A549 (cell line): ENCODE measurements at regions of chr17 and their contacts with region 1.

Region 1: GRCh38 chr17:82297714-82298537 is 19.5 kb downstream of the CD7 start:
- DNase-seq: peak; percentile 92 to 98
- ATAC-seq: peak; percentile 72 to 74
- H3K4me3 ChIP-seq: peak overlapping the region; percentile 42
- H3K27ac ChIP-seq: peak overlapping the region; percentile 96 to 98
- H3K4me1 ChIP-seq: peaks cover 69% of the 10 kb centered on the region
- CTCF ChIP-seq: peak; percentile 15; the same call in 1 of the 3 replicates
- EP300 ChIP-seq: peak in 1 of 2 experiments; percentile 56; a peak in 2 of 5 replicates
- POLR2A ChIP-seq: peak; percentile 63
- RAD21 ChIP-seq: no peak; a peak in 1 of 5 replicates

Region 2: GRCh38 chr17:82020891-82021727 is 276.8 kb before region 1 on chr17:
- CTCF ChIA-PET with region 1: no interaction called
- POLR2A ChIA-PET with region 1: no interaction called
- DNase-seq: peak; percentile 89 to 90
- ATAC-seq: peak; percentile 55 to 56
- H3K4me3 ChIP-seq: peak overlapping the region; percentile 77
- H3K27ac ChIP-seq: peak overlapping the region; percentile 80 to 92; a peak in 5 of 6 replicates
- H3K4me1 ChIP-seq: peaks cover 41% of the 10 kb centered on the region
- CTCF ChIP-seq: peak; percentile 94
- EP300 ChIP-seq: no peak
- POLR2A ChIP-seq: no peak
- RAD21 ChIP-seq: peak; percentile 97 to 98

Region 3: DNA sequence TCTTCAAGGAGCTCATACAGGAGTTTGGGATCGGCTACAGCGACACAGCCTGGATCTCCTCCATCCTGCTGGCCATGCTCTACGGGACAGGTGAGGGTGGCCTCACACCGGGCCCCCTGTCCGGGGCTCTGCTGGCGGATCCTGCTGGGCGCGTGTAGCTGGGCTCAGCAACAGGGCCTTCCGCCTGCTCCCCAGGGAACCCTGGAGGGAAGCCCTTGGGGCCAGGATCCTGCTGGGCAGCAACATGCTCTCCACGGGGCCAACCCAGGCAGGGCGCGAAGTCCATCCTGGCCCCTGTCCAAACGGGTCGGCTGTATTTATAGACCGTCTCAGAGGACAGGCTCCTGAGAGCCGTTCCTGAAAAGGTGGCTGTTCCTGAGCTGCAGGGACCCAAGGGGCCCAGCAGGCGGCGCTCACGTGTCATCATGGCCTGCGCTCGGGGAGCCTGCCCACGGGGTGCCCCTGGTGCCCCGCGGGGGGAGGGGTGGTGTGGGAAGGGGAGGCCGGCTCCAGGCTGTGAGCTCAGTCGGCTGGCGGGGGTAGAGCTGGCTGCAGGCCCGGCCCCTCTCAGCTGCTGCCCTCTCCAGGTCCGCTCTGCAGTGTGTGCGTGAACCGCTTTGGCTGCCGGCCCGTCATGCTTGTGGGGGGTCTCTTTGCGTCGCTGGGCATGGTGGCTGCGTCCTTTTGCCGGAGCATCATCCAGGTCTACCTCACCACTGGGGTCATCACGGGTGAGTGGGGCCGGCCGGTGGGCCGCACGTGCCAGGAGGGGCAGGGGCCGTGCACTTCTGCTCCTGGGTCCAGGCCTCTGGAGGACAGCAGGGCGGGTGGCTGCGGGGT is 61.6 kb before region 1 on chr17:
- CTCF ChIA-PET with region 1: interaction called, 227 read pairs
- POLR2A ChIA-PET with region 1: interaction called, 24 read pairs
- DNase-seq: peak; percentile 79 to 80
- ATAC-seq: peak; percentile 2 to 17; a peak in 3 of 6 replicates
- H3K4me3 ChIP-seq: no peak overlapping the region
- H3K27ac ChIP-seq: peak overlapping the region; percentile 68 to 71
- H3K4me1 ChIP-seq: peaks cover 83% of the 10 kb centered on the region
- CTCF ChIP-seq: peak; percentile 97
- EP300 ChIP-seq: no peak
- POLR2A ChIP-seq: no peak
- RAD21 ChIP-seq: peak; percentile 92 to 95

Region 4: GRCh38 chr17:82267575-82268379 is 30.1 kb before region 1 on chr17:
- CTCF ChIA-PET with region 1: interaction called, 10 read pairs
- POLR2A ChIA-PET with region 1: interaction called, 36 read pairs
- DNase-seq: peak; percentile 94 to 97
- ATAC-seq: peak; percentile 93 to 94
- H3K4me3 ChIP-seq: peak overlapping the region; percentile 35
- H3K27ac ChIP-seq: peak overlapping the region; percentile 89 to 91
- H3K4me1 ChIP-seq: peaks cover 68% of the 10 kb centered on the region
- CTCF ChIP-seq: no peak
- EP300 ChIP-seq: peak in 1 of 2 experiments; percentile 54; a peak in 1 of 5 replicates
- POLR2A ChIP-seq: no peak
- RAD21 ChIP-seq: peak; percentile 29 to 43; a peak in 1 of 5 replicates

Region 5: DNA sequence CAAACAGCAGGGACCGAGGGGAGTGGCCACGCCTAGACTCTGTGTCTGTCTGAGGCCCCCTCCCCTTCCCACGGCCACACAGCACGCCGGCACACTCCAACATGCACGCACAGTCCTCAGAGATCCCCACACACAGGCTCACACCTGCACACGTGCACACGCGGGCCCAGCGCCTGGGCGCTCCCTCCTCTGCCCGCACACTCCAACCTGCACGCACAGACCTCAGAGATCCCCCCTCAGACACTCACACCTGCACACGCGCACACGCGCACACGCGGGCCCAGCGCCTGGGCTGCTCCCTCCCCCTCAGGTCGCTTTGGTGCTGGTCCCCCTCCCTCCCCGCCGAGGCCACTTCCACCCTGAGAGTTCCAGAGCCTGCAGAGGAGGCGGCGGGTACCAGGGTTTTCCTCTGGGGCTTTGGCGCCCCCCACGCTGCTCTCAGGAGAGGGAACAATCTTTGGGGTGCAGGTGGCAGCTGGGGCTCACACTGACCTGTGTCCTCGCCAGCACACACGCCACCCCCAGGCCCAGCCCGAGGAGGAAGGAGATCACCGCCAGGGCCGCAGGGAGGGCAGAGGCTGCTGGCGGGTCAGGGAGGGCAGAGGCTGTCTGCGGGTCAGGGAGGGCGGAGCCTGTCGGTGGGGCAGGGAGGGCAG is 17.9 kb after region 1 on chr17:
- CTCF ChIA-PET with region 1: interaction called, 343 read pairs
- POLR2A ChIA-PET with region 1: interaction called, 3 read pairs
- DNase-seq: no peak
- ATAC-seq: peak in 1 of 2 experiments; percentile 14; a peak in 2 of 6 replicates
- H3K4me3 ChIP-seq: no peak overlapping the region
- H3K27ac ChIP-seq: peak overlapping the region in 1 of 2 experiments; percentile 2; a peak in 1 of 6 replicates
- H3K4me1 ChIP-seq: peaks cover 3% of the 10 kb centered on the region; the same call in 2 of the 3 replicates
- CTCF ChIP-seq: no peak
- EP300 ChIP-seq: no peak
- POLR2A ChIP-seq: no peak
- RAD21 ChIP-seq: no peak

Region 6: GRCh38 chr17:82338858-82339633 is 41.1 kb after region 1 on chr17:
- CTCF ChIA-PET with region 1: interaction called, 343 read pairs
- POLR2A ChIA-PET with region 1: interaction called, 9 read pairs
- DNase-seq: peak; percentile 86 to 94
- ATAC-seq: peak; percentile 81 to 89
- H3K4me3 ChIP-seq: peak overlapping the region; percentile 37
- H3K27ac ChIP-seq: peak overlapping the region; percentile 86 to 92
- H3K4me1 ChIP-seq: peaks cover 42% of the 10 kb centered on the region
- CTCF ChIP-seq: no peak
- EP300 ChIP-seq: no peak
- POLR2A ChIP-seq: peak; percentile 29; the same call in 1 of the 2 replicates
- RAD21 ChIP-seq: no peak; a peak in 1 of 5 replicates

Region 7: DNA sequence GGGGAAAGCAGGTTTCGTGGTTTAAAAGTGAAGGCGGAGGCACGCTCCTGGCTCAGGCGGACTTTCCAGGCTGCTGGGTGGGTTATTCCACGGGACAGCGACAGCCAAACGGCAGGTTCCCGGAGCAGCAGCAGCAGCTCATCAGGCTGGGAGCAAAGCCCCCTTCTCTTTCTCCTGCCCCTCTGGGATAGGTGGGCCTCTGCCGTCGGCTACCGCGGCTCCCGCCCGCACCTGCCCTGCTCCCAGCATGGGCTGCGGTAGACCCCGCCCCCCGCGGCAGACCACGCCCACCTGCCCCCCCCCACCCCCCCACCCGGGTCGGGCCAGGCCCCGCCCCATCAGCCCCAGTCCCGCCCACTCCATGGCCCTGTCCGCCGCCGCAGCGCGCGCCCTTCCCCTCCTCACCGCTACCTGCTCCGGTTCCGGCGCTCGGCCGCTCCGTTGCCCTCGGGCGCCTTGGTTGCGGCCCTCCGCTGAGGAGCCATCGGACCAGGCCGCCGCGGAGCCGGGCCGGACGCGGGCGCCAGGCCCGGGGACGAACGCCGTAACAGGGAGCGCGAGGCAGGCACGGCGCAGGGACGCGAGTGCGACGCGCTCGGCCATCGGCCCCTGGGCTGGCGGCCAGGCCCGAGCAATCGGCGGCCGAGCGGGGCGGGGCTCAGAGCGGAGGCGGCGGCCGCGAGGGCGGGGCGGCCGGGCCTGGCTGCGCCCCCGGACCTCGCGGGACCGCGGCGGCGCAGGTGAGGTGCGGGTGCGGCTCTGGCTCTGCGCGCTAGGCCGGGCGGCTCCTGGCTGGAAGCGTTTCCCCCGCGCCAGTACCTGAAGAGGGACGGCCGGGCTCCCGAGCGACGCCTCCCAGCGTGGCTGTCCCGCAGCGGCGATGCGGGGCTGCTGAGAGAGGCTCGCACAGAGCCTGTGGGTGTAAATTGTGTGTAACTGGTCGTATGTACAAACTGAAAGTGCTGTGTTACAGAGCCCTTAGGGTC is 120.4 kb after region 1 on chr17 and contains the starts of genes HEXD and OGFOD3:
- CTCF ChIA-PET with region 1: interaction called, 25 read pairs
- POLR2A ChIA-PET with region 1: no interaction called
- DNase-seq: peak; percentile 86 to 90
- ATAC-seq: peak; percentile 83 to 86
- H3K4me3 ChIP-seq: peak within 1 kb of the TSS; percentile 67
- H3K27ac ChIP-seq: peak within 1 kb of the TSS; percentile 92 to 96
- H3K4me1 ChIP-seq: peaks cover 11% of the 10 kb centered on the region; the same call in 2 of the 3 replicates
- CTCF ChIP-seq: no peak
- EP300 ChIP-seq: no peak
- POLR2A ChIP-seq: peak; percentile 81
- RAD21 ChIP-seq: no peak; a peak in 1 of 5 replicates
- polyA plus RNA-seq, gene HEXD: 18.0 and 18.4 TPM in 2 replicates
- polyA plus RNA-seq, gene OGFOD3: 14.9 and 15.2 TPM in 2 replicates